ENCODE measurements at regions of chr1 and their contacts with region 1.

Region 1: GRCh38 chr1:88618331-88618730 is 65.7 kb upstream of the PKN2 start:
- DNase-seq: no peak
- H3K27ac ChIP-seq: no peak overlapping the region
- CTCF ChIP-seq: no peak

Region 2: DNA sequence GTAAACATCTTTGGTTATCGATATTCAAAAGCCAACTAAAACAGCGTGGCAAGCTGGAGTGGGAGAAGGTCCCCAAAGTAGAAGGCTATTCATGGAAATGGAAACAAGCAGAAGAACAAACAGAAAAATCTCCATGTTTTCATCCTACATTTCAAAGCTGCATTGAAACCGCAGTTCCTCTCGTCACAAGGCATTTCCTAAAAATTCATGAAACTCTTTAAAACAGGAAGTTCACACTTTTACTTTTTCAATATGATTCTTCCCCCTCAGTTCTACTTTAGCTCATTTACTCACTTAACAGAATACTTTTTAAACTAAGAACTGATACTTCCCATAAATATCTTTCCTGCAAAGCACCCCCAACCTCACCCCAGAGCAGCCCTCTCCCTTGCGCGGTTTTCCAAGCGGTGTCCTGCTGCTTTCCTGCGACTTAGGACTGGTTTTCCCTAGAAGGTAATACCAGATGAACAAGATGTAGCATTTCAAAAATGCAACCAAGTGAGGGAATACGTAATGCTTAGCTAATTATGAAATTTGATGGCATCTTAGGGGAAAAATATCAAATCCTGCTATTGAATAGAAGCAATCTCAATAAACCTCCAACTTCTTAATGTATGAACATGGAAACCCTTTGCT is 162.6 kb before region 1 on chr1:
- CTCF ChIA-PET with region 1: no interaction called
- POLR2A ChIA-PET with region 1: no interaction called
- DNase-seq: no peak
- H3K27ac ChIP-seq: no peak overlapping the region
- CTCF ChIP-seq: no peak

Region 3: DNA sequence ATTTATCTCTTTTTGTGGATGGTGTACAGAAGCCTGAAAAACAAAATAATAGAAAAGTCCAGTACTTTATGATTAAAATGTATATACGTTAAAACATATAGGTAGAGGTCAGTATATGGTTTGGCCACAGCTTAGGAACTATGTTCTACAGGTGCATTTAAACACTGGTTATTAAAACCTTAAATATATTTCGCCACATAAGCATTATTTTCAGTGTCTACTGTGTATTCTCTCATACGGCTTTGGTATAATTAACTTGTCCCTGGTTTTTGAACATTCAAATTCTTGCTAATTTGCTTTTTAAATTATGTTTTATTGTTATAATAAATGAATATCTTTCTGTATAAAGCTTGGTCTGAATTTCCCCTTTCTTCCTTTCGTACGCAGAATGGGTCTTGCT is 185.1 kb after region 1 on chr1:
- CTCF ChIA-PET with region 1: no interaction called
- POLR2A ChIA-PET with region 1: interaction called, 10 read pairs
- DNase-seq: no peak
- H3K27ac ChIP-seq: no peak overlapping the region
- CTCF ChIP-seq: no peak

Measured in RWPE1 (cell line).